OCI-LY7 (cell line): ENCODE measurements at regions of chr12 and their contacts with region 1.

Region 1: GRCh38 chr12:116737774-116738700 is at the starts of genes RNFT2 and SPRING1:
- DNase-seq: peak; percentile 99
- H3K4me3 ChIP-seq: peak within 1 kb of the TSS; percentile 81
- H3K27ac ChIP-seq: peak within 1 kb of the TSS; percentile 65
- H3K4me1 ChIP-seq: peaks cover 17% of the 10 kb centered on the region
- CTCF ChIP-seq: peak; percentile 64
- total RNA-seq, gene RNFT2: 34.3 and 40.2 TPM in 2 replicates
- total RNA-seq, gene SPRING1: 51.2 and 75.5 TPM in 2 replicates

Region 2: DNA sequence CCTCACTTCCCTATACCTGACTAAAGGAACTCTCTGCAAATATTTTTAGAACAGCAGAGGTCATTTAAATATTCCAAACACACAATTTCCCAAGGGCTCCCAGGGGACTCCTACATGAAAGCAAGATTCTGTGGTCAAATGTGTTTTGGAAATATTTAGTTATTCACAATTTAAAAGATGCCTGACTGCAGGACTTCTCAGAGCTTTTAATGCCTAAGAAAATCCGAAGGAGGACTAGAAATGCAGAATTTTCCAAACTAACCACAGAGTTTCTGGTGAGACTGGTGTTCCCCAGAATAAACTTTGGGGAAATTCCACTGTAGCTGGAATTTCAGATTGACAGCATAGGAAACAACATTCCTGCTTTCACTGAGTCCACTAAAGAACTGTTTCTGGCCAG is 263.7 kb before region 1 on chr12:
- CTCF ChIA-PET with region 1: no interaction called
- POLR2A ChIA-PET with region 1: no interaction called
- intact Hi-C with region 1: no loop called
- DNase-seq: no peak
- H3K4me3 ChIP-seq: no peak overlapping the region
- H3K27ac ChIP-seq: no peak overlapping the region
- H3K4me1 ChIP-seq: no peaks in the 10 kb centered on the region
- CTCF ChIP-seq: no peak

Region 3: DNA sequence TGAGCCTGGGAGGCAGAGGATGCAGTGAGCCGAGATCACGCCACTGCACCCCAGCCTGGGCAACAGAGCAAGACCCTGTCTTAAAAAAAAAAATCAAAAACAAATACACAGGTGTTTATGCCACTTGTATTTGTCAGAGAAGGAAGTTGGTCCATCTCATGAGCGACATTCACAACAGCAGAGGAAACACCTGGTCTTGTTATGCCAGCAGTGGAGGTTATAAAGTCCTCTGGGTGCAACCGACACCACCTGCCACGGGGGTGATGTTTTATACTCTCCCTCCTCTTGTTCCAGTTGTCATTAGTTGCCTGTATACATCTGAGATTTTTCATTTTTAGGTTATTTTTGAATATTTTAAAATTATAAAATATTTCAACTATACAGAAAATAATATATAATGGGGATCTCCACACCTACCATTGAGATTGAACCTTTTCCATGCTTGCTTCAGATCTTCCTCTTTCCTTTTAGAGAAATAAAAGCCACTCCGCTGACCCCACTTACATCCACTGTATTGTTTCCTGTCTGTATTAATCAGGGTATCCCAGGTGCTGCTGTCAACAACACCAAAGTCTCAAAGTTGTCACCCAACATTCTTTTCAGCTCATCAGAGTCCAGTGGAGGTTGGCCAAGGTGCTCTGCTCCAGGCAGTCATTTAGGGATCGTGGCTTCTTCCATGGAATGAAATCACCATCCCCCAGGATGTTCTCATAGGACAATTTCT is 65.1 kb after region 1 on chr12:
- CTCF ChIA-PET with region 1: no interaction called
- POLR2A ChIA-PET with region 1: interaction called, 3 read pairs
- intact Hi-C with region 1: loop called (anchors 1 kb)
- DNase-seq: peak; percentile 98
- H3K4me3 ChIP-seq: peak overlapping the region; percentile 55
- H3K27ac ChIP-seq: peak overlapping the region; percentile 100
- H3K4me1 ChIP-seq: peaks cover 76% of the 10 kb centered on the region
- CTCF ChIP-seq: no peak

Region 4: DNA sequence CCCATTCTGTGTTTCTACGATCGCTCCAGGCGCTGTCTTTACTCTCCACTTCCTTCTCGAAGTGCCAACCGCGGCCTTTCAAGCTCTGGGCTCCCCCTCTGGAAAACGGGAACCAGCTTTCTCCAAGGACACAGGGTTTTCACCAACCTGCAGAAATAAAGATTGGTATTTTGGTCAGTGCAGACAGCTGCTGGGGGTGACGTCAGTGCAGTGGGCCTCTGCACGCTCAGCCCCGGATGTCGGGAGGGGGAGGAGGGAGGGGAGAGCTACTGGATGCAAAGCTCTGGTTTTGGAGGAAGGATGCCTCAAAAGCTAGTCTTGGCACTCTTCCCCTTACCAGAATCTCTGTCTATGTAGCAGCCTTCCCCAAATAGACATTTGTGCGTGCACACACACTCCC is 123.3 kb after region 1 on chr12:
- CTCF ChIA-PET with region 1: no interaction called
- POLR2A ChIA-PET with region 1: no interaction called
- intact Hi-C with region 1: loop called (anchors 1 kb)
- DNase-seq: peak; percentile 92
- H3K4me3 ChIP-seq: peak overlapping the region; percentile 54
- H3K27ac ChIP-seq: peak overlapping the region; percentile 91
- H3K4me1 ChIP-seq: peaks cover 80% of the 10 kb centered on the region
- CTCF ChIP-seq: no peak